Posterior cingulate gyrus (tissue), 11 donors: ENCODE measurements at regions of chr11 and their contacts with region 1.

Region 1: GRCh38 chr11:14789879-14790484 is 102.0 kb downstream of the CYP2R1 start:
- DNase-seq: no peak

Region 2: DNA sequence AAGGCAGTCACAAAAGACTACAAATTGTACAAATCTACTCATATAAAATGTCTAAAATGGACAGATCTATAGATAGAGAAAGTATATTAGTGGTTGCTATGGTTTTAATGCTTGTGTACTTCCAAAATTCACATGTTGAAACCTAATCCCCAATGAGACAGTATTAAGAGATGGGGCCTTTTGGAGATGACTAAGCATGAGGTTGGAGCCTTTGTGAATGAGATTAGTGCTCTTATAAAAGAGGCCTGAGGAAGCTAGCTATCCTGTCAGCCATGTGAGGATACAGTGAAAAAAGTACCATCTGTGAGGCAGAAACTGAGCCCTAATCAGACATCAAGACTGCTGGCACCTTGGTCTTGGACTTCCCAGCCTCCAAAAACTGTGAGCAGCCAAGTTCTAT is 19.5 kb after region 1 on chr11:
- intact Hi-C with region 1: no loop called
- DNase-seq: no peak

Region 3: GRCh38 chr11:14819596-14819995 is 29.6 kb after region 1 on chr11:
- intact Hi-C with region 1: no loop called
- DNase-seq: no peak

Region 4: DNA sequence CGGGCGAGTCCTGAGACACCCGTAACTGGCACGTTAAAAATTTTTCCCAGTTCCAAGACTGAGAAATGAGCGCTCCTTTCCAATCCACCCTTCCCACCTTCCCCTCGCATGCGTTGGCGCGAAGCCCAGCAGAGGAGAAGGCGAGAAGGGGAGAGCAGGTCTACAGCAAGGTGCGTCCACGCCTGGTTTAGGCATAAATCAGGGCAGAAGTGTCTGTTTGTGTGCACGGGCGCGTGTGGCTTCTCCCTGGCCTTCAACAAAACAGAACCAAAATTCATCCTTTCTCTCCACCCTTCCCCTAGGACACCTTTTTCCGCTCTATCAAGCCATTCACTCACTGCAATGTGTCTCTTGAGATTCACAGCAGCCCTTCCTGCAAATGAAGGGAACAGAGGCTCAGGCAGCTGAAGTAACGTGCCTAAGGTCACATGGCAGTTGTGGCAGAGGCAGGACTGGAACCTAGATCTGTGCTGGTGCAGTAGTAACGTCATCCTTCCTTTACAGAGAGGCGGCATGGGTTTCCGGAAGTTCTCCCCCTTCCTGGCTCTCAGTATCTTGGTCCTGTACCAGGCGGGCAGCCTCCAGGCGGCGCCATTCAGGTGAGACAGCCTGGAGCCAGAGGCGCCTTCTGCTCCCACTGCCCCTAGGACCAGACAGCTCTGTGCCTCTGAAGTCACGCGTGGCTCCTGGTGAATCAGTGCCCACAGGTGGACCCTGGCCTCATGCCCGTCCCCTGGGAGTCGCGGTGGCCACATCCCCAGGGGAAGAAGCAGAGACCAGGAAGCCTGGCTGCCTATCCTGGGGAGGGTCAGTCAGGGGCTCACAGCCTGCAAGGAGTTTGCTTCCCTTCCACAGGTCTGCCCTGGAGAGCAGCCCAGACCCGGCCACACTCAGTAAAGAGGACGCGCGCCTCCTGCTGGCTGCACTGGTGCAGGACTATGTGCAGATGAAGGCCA is 284.5 kb after region 1 on chr11:
- intact Hi-C with region 1: loop called (anchors 10 kb)
- DNase-seq: peak; percentile 54 to 96 (median 80)

Region 5: GRCh38 chr11:15208378-15209222 is 418.6 kb after region 1 on chr11:
- intact Hi-C with region 1: loop called (anchors 10 kb)
- DNase-seq: peak; percentile 63 to 97 (median 85)